ENCODE measurements at regions of chr6 and their contacts with region 1.

Region 1: DNA sequence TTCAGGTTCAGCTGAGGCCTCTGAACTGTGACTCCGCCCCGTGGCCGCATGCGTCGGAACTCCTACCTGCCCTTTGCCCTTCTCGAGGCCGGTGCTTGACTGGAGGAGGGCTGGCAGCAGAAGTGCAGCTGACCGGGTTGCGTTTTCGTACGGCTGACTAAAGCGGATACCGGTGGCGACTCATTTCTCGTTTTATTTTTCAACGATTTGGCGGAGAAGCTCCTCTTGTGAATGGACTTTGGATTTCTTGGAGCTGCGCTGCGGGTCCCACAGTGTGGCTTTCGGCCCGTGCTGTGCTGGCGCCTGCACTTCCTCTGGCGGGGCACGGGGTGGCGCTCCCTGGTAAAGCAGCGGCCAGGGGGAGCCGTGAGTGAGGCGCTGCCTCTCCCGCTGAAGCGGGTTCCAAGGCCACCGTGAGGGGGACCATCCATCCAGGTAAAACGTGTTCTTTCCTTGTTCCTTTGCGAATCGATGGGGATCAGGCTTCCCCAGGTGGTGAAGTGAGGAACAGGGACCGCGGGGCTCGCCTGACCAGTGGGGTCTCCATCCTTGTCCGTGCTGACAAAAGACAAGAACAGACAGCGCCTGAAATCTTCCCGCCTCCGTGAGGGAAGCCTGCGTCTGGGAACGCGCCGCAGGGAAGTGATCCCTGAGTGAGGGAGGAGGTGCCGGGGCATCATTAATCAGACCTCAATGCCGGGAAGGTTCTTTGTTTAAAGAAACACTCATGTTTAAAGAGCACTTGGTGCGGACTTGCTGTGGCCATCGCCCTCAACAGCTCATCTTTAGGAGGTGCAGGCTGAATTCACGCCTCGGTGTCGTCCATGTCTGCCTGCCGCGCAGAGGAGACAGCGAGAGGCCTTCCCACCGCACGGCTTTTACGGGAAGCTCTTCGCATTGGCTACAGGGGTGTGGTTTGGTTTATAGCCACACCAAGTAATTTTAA is 38.8 kb downstream of the ERMARD start:
- DNase-seq: peak; percentile 94

Region 2: DNA sequence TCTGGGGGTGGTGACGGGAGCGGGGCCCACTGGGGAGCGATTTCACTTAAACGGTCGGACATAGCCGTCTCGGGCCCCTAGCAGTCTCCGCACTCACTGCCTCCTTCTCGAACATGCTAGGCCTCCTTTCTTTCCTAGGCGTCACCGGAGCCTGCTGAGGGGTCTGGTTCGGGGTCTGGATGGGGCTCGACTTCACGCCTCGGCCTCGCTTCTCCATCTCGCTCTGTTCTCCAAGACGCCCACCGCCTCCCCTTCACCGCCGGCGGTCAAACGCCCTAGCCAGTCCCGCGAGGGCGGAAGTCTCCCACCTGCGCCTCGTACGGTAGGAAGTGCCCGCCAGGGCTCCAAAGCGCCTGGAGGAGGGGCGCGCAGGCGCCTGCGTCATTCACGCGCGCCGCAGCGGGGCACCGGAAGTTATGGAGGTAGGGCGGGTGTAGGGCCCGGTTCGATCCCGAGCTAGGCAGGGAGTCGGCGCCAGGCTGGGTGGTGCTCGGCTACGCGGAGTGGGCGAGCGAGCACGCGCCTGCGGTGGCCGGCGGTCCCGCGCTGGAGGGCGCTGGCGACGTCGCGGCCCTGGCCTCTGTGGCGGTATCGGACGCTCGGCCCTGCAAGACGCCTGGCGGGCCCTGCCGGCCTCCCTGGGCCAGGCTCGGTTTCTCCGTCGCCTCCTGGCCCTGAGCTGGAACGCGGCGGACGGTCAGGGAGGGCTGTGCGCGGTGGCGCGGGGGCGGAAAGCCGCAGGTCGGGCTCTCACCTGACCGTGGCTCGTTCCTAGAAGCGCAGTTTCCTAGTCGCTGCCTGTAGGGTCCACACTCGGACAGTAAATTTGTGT is 38.8 kb before region 1 on chr6 and contains the starts of genes DYNLT2 and ERMARD:
- intact Hi-C with region 1: no loop called
- DNase-seq: peak; percentile 98
- total RNA-seq, gene DYNLT2: 1.1 TPM
- total RNA-seq, gene ERMARD: 19.6 to 22.1 TPM

Region 3: DNA sequence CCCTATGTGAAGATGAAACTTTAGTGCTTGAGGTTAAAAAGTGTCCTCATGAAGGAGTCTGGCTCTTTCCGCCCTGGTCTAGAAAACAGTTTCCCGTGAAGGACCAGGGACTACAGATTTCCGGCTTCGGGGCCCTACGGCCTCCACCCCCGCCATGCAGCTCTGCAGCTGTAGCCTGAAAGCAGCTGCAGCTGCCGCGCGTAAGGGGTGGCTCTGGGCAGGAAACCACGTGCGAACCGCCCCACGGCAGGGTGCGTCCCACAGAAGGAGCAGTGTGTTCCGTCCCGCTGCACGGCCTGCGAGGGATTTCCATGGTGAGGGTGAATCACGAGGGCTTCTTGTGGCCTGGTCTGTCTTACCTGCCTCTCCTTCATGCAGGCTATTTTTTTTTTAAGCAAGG is 78.2 kb after region 1 on chr6:
- intact Hi-C with region 1: no loop called
- DNase-seq: peak; percentile 83

Region 4: GRCh38 chr6:169883316-169883715 is 93.1 kb after region 1 on chr6:
- intact Hi-C with region 1: no loop called
- DNase-seq: no peak

Region 5: GRCh38 chr6:170057961-170058858 is 268.0 kb after region 1 on chr6:
- intact Hi-C with region 1: loop called in 1 of 2 experiments (anchors 5 kb)
- DNase-seq: peak; percentile 78

Region 6: GRCh38 chr6:170529839-170530469 is 739.7 kb after region 1 on chr6:
- intact Hi-C with region 1: loop called in 1 of 2 experiments (anchors 5 kb)
- DNase-seq: peak; percentile 93